ENCODE measurements at regions of chr1 and their contacts with region 1.

Region 1: GRCh38 chr1:169794530-169795416 is at the start of gene METTL18:
- DNase-seq: peak; percentile 92

Region 2: DNA sequence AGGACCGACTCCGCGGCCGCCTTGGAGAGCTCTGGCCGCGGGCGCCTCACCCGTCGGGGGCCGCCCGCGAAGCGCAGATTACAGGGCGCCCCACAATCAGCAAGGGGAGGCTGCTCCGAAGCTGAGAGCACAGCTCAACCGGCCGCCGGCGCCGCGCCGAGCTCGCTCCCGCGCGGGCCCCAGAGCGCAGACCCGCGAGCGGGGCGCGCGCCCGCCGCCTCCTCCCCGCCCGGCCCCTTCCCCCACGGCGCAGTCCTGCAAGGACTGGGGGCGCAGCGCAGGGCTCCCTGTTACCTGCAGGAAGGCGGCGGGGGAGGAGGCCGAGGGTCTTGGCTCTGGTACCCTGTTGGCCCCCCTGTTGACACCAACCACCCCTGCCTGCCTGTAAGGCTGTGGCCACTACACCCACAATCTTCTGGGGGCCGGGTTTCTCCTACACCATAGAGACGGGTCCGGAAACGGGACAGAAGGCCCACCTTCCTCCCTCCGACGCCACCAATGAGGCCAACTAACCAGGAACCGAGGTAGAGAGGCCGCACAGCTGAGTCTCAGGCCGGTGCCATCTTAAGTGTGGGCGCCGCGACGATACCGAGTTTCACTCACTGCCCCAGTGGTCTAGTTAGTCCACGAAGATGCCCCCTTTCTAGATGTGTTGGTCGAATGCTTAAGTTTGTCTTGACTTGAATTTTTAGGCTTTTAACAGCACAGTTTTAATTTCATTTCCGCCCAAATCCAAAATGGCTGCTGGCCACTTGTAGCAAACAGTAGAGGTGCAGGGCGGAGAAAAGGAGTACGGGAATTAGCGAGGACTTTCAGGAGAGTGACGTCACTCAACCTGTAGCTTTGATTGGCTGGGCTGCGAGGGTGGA is 99.0 kb after region 1 on chr1 and contains the start of gene SCYL3:
- CTCF ChIA-PET with region 1: no interaction called
- POLR2A ChIA-PET with region 1: interaction called, 11 read pairs
- DNase-seq: peak; percentile 97